ENCODE measurements at regions of chr6 and their contacts with region 1.

Region 1: GRCh38 chr6:33147807-33148666 is 44.2 kb downstream of the COL11A2 start:
- DNase-seq: no peak
- ATAC-seq: no peak
- H3K4me3 ChIP-seq: no peak overlapping the region
- H3K27ac ChIP-seq: no peak overlapping the region
- H3K4me1 ChIP-seq: no peaks in the 10 kb centered on the region
- H3K27me3 ChIP-seq: peaks cover 0 to 16% (median 12%) of the 10 kb centered on the region in 3 donors
- CTCF ChIP-seq: peak; percentile 41 to 69 (median 59)
- POLR2A ChIP-seq: no peak

Region 2: GRCh38 chr6:32991972-32992371 is 156.1 kb before region 1 on chr6:
- in situ Hi-C with region 1: no loop called
- intact Hi-C with region 1: no loop called
- DNase-seq: no peak
- ATAC-seq: no peak
- H3K4me3 ChIP-seq: no peak overlapping the region
- H3K27ac ChIP-seq: no peak overlapping the region
- H3K4me1 ChIP-seq: no peaks in the 10 kb centered on the region
- H3K27me3 ChIP-seq: no peaks in the 10 kb centered on the region
- CTCF ChIP-seq: no peak
- POLR2A ChIP-seq: no peak

Region 3: GRCh38 chr6:33008944-33009861 is 138.8 kb before region 1 on chr6 and contains the start of gene HLA-DOA:
- in situ Hi-C with region 1: no loop called
- intact Hi-C with region 1: loop called (anchors 10 kb)
- DNase-seq: no peak
- ATAC-seq: peak in 1 of 2 donors; percentile 51
- H3K4me3 ChIP-seq: peak within 1 kb of the TSS in 1 of 4 donors; percentile 15
- H3K27ac ChIP-seq: no peak within 1 kb of the TSS
- H3K4me1 ChIP-seq: no peaks in the 10 kb centered on the region
- H3K27me3 ChIP-seq: peaks cover 0 to 11% (median 5%) of the 10 kb centered on the region in 3 donors
- CTCF ChIP-seq: no peak
- POLR2A ChIP-seq: no peak
- total RNA-seq, gene HLA-DOA: 0.20 to 2.9 (median 0.86) TPM

Region 4: GRCh38 chr6:33118525-33119123 is 29.4 kb before region 1 on chr6:
- in situ Hi-C with region 1: no loop called
- intact Hi-C with region 1: loop called (anchors 1 kb)
- DNase-seq: no peak
- ATAC-seq: peak; percentile 51 to 52
- H3K4me3 ChIP-seq: no peak overlapping the region
- H3K27ac ChIP-seq: no peak overlapping the region
- H3K4me1 ChIP-seq: no peaks in the 10 kb centered on the region
- H3K27me3 ChIP-seq: peaks cover 24 to 35% (median 29%) of the 10 kb centered on the region in 3 donors
- CTCF ChIP-seq: peak; percentile 73 to 90 (median 82)
- POLR2A ChIP-seq: no peak

Measured in gastrocnemius medialis (tissue), 4 donors.